ENCODE measurements at regions of chr5 and their contacts with region 1.

Region 1: DNA sequence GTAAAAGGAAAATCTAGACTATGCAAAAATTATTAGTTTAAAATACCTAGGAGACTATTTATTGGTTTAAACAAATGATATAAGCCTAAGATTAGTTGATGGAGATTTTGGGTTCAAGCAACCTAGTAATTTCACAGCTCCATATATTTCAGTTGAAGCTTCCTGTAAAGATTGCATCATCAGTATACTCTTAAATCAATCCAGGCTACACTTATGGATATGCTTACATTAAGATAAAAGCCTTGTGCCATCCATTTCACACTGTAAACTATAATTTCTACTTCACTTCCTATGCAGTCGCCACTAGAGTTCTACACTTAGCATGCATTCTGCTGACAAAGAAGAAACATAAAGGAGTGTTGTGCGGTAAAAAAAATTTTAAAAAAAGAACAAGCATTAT is 7.3 kb upstream of the LIX1 start:
- DNase-seq: no peak
- H3K4me3 ChIP-seq: no peak overlapping the region
- CTCF ChIP-seq: no peak

Region 2: GRCh38 chr5:96776621-96777020 is 373.1 kb before region 1 on chr5:
- in situ Hi-C with region 1: loop called (anchors 5 kb)
- DNase-seq: no peak
- H3K4me3 ChIP-seq: no peak overlapping the region
- CTCF ChIP-seq: no peak

Region 3: DNA sequence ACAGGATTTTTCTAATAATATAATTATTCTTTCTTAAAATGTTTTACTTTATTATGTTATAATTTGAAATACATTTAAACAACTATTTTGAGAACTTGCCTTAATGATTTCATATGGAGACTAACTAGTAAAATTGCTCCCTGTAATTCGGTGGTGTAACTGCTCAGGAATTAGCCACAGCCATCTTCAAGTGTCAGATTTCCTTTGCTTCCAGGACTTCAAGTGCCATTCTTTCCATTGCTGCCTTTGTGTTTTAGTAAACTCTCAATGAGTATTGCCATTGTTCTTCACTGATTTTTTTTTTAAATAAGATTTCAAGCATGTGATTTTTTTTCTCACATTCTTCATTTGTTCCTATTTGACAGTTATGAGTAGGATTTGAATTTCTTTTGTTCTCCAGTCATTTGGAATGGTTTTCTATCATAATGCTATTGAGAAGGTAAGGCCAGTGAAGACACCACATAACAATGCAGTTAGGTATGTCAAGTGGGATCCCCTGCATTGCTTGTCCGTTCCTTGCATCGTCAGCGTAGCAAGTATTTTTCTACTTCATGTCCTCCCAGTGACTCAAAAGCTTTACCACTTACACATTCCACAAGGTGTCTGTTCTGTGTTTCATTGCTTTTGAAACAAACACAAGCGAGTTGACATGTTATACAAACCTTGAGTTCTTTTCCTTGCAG is 130.1 kb before region 1 on chr5:
- in situ Hi-C with region 1: loop called (anchors 10 kb)
- DNase-seq: peak; percentile 33
- H3K4me3 ChIP-seq: no peak overlapping the region
- CTCF ChIP-seq: no peak

Region 4: DNA sequence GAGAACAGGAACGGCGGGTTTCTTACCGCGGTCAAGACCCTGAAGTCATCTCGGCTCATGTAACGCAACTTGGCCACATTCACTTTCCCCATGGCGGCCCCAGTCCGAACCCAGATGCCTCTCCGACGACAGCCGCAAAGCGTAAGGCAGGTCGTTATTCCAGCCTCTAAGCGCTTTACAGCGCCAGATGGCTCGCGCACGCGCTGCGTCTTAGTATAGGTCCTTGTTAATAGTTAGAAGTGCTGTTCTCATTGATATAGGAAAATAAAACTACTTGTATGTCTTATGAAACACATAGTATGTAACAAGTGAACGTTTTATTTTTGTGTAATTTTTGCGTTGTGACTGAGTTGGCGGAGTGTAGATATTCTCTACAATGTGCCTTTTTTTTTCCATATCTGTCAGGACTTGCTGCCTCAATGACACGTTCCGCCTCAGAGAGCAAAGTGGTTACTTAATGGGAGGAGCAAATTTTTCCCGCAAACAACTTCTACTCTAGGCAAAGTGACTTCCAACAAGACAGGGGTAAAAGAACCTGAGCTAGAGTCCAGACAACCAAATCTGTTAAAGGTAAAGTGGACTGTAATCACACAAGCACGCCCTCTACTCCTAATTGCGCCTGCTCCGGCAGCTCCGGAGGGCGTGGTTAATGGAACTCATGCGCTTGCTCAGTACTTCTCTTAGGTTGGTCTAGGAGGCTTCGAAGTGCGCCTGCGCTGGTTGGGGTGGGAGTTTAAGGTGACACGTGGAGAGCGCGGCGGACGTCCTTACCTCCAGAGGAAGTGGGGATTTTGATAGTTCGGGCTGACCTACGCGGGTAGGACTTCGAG is 33.6 kb after region 1 on chr5 and contains the start of gene RIOK2:
- in situ Hi-C with region 1: no loop called
- DNase-seq: peak; percentile 86
- H3K4me3 ChIP-seq: peak within 1 kb of the TSS; percentile 89
- CTCF ChIP-seq: no peak

Measured in astrocyte of the cerebellum (primary cell).